Activated CD4-positive, alpha-beta T cell treated with anti-CD3 and anti-CD28 coated beads, Interleukin-2, amount 10 ng/mL, durations not matched to agents 24 days and 14 days (primary cell): ENCODE measurements at regions of chr12 and their contacts with region 1.

Region 1: GRCh38 chr12:110600254-110600653 is 13.7 kb upstream of the TCTN1 start:
- DNase-seq: peak; percentile 67
- H3K4me3 Mint-ChIP-seq: no peak overlapping the region
- H3K27ac Mint-ChIP-seq: no peak overlapping the region
- H3K4me1 Mint-ChIP-seq: peaks cover 13% of the 10 kb centered on the region
- H3K27me3 Mint-ChIP-seq: no peaks in the 10 kb centered on the region

Region 2: DNA sequence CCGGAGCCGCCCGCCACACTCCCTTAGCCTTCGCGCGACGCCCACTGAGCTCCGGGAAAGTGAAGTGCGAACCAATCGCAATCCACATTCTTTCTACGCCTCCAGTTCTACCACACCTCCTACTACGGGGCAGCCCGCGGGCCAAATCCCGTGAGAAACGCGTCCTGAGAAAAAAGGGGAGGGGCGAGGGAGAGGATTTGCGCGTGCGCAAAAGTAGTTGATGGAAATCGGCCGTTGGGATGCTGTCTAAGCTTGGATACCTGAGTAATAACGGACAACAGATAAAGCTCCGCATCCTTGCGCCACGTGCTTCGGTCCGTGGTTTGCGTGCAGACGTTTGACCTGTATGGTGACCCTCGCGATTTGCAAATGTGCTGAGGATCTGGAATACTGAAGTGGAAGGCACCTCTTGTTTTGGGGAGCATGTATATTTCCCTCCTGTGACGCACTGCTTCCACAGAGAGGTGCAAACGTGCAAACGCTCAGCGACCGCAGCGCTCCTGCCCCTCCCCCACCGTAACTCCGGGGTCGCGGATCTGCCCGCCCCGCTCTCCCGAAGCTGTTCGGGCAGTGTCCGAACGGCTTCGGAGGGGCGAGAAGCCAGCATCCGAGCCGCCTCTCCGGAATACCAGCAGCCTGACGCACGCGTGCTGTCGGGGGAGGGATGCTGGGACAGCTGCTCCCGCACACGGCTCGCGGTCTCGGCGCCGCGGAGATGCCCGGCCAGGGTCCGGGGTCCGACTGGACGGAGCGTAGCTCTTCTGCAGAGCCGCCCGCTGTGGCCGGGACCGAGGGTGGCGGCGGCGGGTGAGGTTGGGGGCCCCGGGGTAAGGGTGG is 131.8 kb before region 1 on chr12 and contains the starts of genes FAM216A and GPN3:
- intact Hi-C with region 1: loop called (anchors 1 kb)
- DNase-seq: peak; percentile 99
- H3K4me3 Mint-ChIP-seq: peak within 1 kb of the TSS; percentile 89
- H3K27ac Mint-ChIP-seq: peak within 1 kb of the TSS; percentile 95
- H3K4me1 Mint-ChIP-seq: peaks cover 32% of the 10 kb centered on the region
- H3K27me3 Mint-ChIP-seq: no peaks in the 10 kb centered on the region
- total RNA-seq, gene FAM216A: 53.7 and 54.4 TPM in 2 replicates
- total RNA-seq, gene GPN3: 60.0 and 62.8 TPM in 2 replicates

Region 3: DNA sequence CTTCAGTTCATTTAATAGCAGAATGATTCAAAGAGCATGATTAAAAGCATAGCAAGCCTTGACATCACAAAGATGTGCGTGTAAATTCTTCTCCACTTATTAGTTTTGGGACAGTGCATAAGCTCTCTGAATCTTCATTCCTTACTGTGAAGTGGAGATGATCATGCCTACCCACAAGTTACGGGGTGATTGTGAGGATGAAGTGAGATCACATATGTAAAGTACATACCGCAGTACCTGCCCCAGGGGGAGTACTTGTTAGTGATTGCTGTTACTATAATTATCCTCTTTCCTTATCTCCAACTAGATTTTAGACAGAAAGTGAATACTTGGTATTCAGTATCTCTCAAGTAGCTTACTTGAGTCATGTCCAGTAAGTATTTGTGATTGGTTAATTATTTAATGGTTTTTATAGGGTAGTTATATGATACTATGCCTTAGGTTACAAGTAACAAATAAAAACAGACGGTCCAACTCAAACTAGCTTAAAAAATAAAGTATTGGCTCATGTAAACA is 92.1 kb before region 1 on chr12:
- intact Hi-C with region 1: loop called (anchors 1 kb)
- DNase-seq: no peak
- H3K4me3 Mint-ChIP-seq: no peak overlapping the region
- H3K27ac Mint-ChIP-seq: no peak overlapping the region
- H3K4me1 Mint-ChIP-seq: no peaks in the 10 kb centered on the region
- H3K27me3 Mint-ChIP-seq: peaks cover 7% of the 10 kb centered on the region

Region 4: GRCh38 chr12:110555577-110556406 is 44.5 kb before region 1 on chr12:
- intact Hi-C with region 1: loop called (anchors 1 kb)
- DNase-seq: no peak
- H3K4me3 Mint-ChIP-seq: no peak overlapping the region
- H3K27ac Mint-ChIP-seq: no peak overlapping the region
- H3K4me1 Mint-ChIP-seq: peaks cover 33% of the 10 kb centered on the region
- H3K27me3 Mint-ChIP-seq: no peaks in the 10 kb centered on the region